ENCODE measurements at regions of chr6 and their contacts with region 1.

Region 1: DNA sequence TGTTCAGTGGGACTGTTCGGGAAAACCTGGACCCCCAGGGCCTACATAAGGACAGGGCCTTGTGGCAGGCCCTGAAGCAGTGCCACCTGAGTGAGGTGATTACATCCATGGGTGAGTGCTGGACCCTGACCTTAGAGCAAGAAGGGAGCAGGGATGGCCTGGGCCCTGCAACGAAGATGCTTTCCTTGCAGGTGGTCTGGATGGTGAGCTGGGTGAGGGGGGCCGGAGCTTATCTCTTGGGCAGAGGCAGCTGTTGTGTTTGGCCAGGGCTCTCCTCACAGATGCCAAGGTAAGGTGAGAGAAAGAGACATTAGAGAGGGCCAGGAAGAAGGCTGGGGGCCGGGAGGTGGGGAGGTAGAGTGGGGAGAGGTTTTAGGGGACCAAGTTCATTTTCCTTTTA is 6.4 kb downstream of the DLK2 start:
- DNase-seq: no peak
- ATAC-seq: no peak
- H3K4me3 ChIP-seq: no peak overlapping the region
- H3K27ac ChIP-seq: no peak overlapping the region
- H3K4me1 ChIP-seq: peaks cover under 1% of the 10 kb centered on the region; the same call in 1 of the 2 replicates
- H3K27me3 ChIP-seq: no peaks in the 10 kb centered on the region
- CTCF ChIP-seq: no peak

Region 2: GRCh38 chr6:42928986-42929820 is 519.7 kb before region 1 on chr6 and contains the start of gene CNPY3:
- CTCF ChIA-PET with region 1: no interaction called
- POLR2A ChIA-PET with region 1: interaction called, 16 read pairs
- in situ Hi-C with region 1: no loop called
- intact Hi-C with region 1: no loop called
- DNase-seq: peak; percentile 80
- ATAC-seq: peak; percentile 96
- H3K4me3 ChIP-seq: peak within 1 kb of the TSS; percentile 82 to 97
- H3K27ac ChIP-seq: peak within 1 kb of the TSS; percentile 98
- H3K4me1 ChIP-seq: peaks cover 9% of the 10 kb centered on the region; the same call in 1 of the 2 replicates
- H3K27me3 ChIP-seq: no peaks in the 10 kb centered on the region
- CTCF ChIP-seq: no peak
- total RNA-seq, gene CNPY3: 72.8 TPM